ENCODE measurements at regions of chr2 and their contacts with region 1.

Region 1: GRCh38 chr2:219206442-219207253 is at the start of gene ZFAND2B:
- DNase-seq: peak; percentile 96
- H3K4me3 Mint-ChIP-seq: peak within 1 kb of the TSS; percentile 92
- H3K27ac Mint-ChIP-seq: peak within 1 kb of the TSS; percentile 99
- H3K4me1 Mint-ChIP-seq: peaks cover 40% of the 10 kb centered on the region
- H3K27me3 Mint-ChIP-seq: no peaks in the 10 kb centered on the region
- total RNA-seq, gene ZFAND2B: 35.0 and 41.3 TPM in 2 replicates

Region 2: GRCh38 chr2:219218732-219219701 is 12.4 kb after region 1 on chr2 and contains the start of gene ABCB6:
- intact Hi-C with region 1: loop called (anchors 1 kb)
- DNase-seq: peak; percentile 86
- H3K4me3 Mint-ChIP-seq: peak within 1 kb of the TSS; percentile 87
- H3K27ac Mint-ChIP-seq: peak within 1 kb of the TSS; percentile 86
- H3K4me1 Mint-ChIP-seq: peaks cover 23% of the 10 kb centered on the region
- H3K27me3 Mint-ChIP-seq: no peaks in the 10 kb centered on the region
- total RNA-seq, gene ABCB6: 31.9 and 32.9 TPM in 2 replicates

Region 3: GRCh38 chr2:219229305-219230058 is 22.8 kb after region 1 on chr2 and contains the starts of genes ANKZF1 and ATG9A:
- intact Hi-C with region 1: loop called (anchors 1 kb)
- DNase-seq: peak; percentile 98
- H3K4me3 Mint-ChIP-seq: peak within 1 kb of the TSS; percentile 97
- H3K27ac Mint-ChIP-seq: peak within 1 kb of the TSS; percentile 99
- H3K4me1 Mint-ChIP-seq: peaks cover 47% of the 10 kb centered on the region
- H3K27me3 Mint-ChIP-seq: no peaks in the 10 kb centered on the region
- total RNA-seq, gene ANKZF1: 112 and 117 TPM in 2 replicates
- total RNA-seq, gene ATG9A: 55.3 and 57.0 TPM in 2 replicates

Region 4: GRCh38 chr2:219245148-219245898 is 38.7 kb after region 1 on chr2 and contains the starts of genes GLB1L and STK16:
- intact Hi-C with region 1: loop called (anchors 1 kb)
- DNase-seq: peak; percentile 89
- H3K4me3 Mint-ChIP-seq: peak within 1 kb of the TSS; percentile 99
- H3K27ac Mint-ChIP-seq: peak within 1 kb of the TSS; percentile 99
- H3K4me1 Mint-ChIP-seq: peaks cover 57% of the 10 kb centered on the region
- H3K27me3 Mint-ChIP-seq: no peaks in the 10 kb centered on the region
- total RNA-seq, gene GLB1L: 4.6 and 4.9 TPM in 2 replicates
- total RNA-seq, gene STK16: 30.1 and 30.6 TPM in 2 replicates

Region 5: DNA sequence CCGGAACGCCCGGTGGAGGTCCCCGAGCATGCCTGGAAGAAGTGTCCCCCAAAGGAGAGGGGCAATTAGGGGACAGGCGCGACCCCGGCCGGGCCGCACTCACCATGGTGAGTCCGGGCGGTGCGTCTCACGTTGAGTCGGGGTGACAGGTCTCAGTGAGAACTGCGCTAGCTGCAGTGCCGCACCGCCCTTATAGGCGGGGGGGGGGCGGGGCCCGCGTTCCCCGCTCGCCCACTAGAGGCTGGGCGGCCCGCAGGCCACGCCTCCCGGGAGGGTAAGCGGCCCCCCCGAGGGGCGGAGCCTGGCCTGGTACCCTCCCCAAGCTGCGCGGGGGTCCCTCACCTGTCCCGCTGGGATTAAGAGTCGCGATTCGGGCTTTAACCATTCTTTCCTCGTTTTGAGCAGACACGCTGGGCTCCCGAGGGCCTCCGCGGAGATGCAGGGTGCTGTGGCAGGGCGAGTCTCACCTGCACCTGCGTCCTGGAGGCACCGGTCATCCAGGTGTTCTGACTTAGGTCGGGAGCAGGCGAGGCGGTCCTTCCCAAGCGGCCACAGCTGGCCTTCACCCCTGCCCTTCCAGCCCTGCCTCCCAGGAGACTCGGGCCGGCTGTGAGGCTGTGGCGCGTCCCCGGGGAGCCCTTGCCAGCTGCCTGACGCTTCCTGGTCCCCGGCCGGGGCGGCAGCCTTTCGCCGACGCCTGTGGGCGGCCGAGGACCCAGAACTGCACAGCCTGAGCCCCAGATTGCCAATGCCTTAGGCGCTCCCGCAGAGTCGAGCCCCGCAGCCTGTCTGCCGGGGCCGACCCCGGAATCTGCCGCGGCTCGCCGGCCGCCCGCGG is 47.3 kb after region 1 on chr2 and contains the start of gene TUBA4A:
- intact Hi-C with region 1: loop called (anchors 1 kb)
- DNase-seq: peak; percentile 87
- H3K4me3 Mint-ChIP-seq: peak within 1 kb of the TSS; percentile 93
- H3K27ac Mint-ChIP-seq: peak within 1 kb of the TSS; percentile 98
- H3K4me1 Mint-ChIP-seq: peaks cover 50% of the 10 kb centered on the region
- H3K27me3 Mint-ChIP-seq: no peaks in the 10 kb centered on the region
- total RNA-seq, gene TUBA4A: 211 and 217 TPM in 2 replicates

Region 6: GRCh38 chr2:219441451-219442255 is 235.0 kb after region 1 on chr2:
- intact Hi-C with region 1: no loop called
- DNase-seq: peak; percentile 6
- H3K4me3 Mint-ChIP-seq: peak overlapping the region; percentile 77
- H3K27ac Mint-ChIP-seq: no peak overlapping the region
- H3K4me1 Mint-ChIP-seq: peaks cover 14% of the 10 kb centered on the region
- H3K27me3 Mint-ChIP-seq: peaks cover 45% of the 10 kb centered on the region

Region 7: DNA sequence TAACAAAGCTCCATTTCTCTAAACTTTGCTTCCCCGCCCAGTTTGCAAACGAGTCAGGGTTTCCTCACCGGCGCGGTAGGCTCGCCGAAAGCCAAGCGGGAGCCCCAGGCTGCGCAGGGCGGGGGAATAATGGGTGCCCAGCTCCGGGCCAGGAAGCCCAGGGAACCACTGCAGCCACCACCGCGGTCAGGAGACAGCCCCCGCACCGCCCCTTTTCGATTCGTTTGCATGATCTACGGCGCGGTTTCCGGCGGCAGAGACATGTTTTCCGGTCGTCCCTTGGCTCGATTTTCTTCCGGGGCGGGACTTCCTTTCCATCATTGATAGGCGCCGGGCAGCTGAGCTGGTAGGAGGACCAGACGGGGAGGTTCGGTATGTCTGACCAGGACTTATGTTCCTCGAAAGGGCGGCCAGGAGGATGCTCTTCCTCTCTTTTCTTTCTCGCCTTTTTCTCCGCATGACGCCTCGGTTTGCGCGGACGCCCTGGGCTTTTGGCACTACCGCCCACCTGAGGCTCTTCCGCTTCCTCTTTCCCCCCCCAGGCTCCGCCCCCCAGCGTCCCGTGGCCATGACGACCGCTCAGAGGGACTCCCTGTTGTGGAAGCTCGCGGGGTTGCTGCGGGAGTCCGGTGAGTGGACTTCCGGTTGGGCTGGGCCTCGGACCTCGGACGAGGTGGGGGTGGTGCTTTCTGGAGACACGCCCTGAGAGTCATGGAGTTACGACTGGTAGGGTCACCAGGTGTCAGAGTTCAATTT is 391.1 kb after region 1 on chr2 and contains the start of gene STK11IP:
- intact Hi-C with region 1: loop called (anchors 1 kb)
- DNase-seq: peak; percentile 89
- H3K4me3 Mint-ChIP-seq: peak within 1 kb of the TSS; percentile 90
- H3K27ac Mint-ChIP-seq: peak within 1 kb of the TSS; percentile 96
- H3K4me1 Mint-ChIP-seq: peaks cover 26% of the 10 kb centered on the region
- H3K27me3 Mint-ChIP-seq: peaks cover 2% of the 10 kb centered on the region
- total RNA-seq, gene STK11IP: 38.0 and 38.9 TPM in 2 replicates